SK-N-SH (cell line): ENCODE measurements at regions of chr2 and their contacts with region 1.

Region 1: GRCh38 chr2:25982273-25982967 is at the start of gene KIF3C:
- DNase-seq: peak; percentile 95
- H3K4me3 ChIP-seq: peak within 1 kb of the TSS; percentile 84 to 90
- H3K27ac ChIP-seq: peak within 1 kb of the TSS; percentile 40 to 87
- H3K4me1 ChIP-seq: peaks cover 38 to 47% of the 10 kb centered on the region in 2 experiments
- H3K27me3 ChIP-seq: no peaks in the 10 kb centered on the region
- CTCF ChIP-seq: 0 out of 2 replicates have a peak, but pooled peaks have one; percentile 0
- EP300 ChIP-seq: no peak
- RAD21 ChIP-seq: no peak
- polyA plus RNA-seq, gene KIF3C: 18.6 and 29.5 TPM in 2 replicates

Region 2: GRCh38 chr2:25894135-25894830 is 88.1 kb before region 1 on chr2:
- CTCF ChIA-PET with region 1: no interaction called
- POLR2A ChIA-PET with region 1: no interaction called
- DNase-seq: peak; percentile 47
- H3K4me3 ChIP-seq: no peak overlapping the region
- H3K27ac ChIP-seq: no peak overlapping the region
- H3K4me1 ChIP-seq: peaks cover 0 to 4% of the 10 kb centered on the region in 2 experiments; a peak in 1 of 4 replicates
- H3K27me3 ChIP-seq: no peaks in the 10 kb centered on the region
- CTCF ChIP-seq: no peak
- EP300 ChIP-seq: no peak
- RAD21 ChIP-seq: no peak

Region 3: GRCh38 chr2:26033818-26034636 is 51.6 kb after region 1 on chr2 and contains the start of gene RAB10:
- CTCF ChIA-PET with region 1: interaction called, 4 read pairs
- POLR2A ChIA-PET with region 1: interaction called, 11 read pairs
- DNase-seq: peak; percentile 99
- H3K4me3 ChIP-seq: peak within 1 kb of the TSS; percentile 82 to 90
- H3K27ac ChIP-seq: peak within 1 kb of the TSS; percentile 91 to 94
- H3K4me1 ChIP-seq: peaks cover 4 to 11% of the 10 kb centered on the region in 2 experiments; a peak in 3 of 4 replicates
- H3K27me3 ChIP-seq: no peaks in the 10 kb centered on the region
- CTCF ChIP-seq: no peak
- EP300 ChIP-seq: 0 out of 4 replicates have a peak, but pooled peaks of 1 of the 2 experiments have one; percentile 7
- RAD21 ChIP-seq: 0 out of 2 replicates have a peak, but pooled peaks have one; percentile 7
- polyA plus RNA-seq, gene RAB10: 47.5 and 57.5 TPM in 2 replicates